Pancreas (tissue), 10 donors: ENCODE measurements at regions of chr20 and their contacts with region 1.

Region 1: GRCh38 chr20:36205026-36205425 is 31.3 kb upstream of the AAR2 start:
- DNase-seq: no peak
- ATAC-seq: no peak
- H3K4me3 ChIP-seq: no peak overlapping the region
- H3K27ac ChIP-seq: no peak overlapping the region
- H3K4me1 ChIP-seq: no peaks in the 10 kb centered on the region
- H3K27me3 ChIP-seq: no peaks in the 10 kb centered on the region
- CTCF ChIP-seq: no peak

Region 2: DNA sequence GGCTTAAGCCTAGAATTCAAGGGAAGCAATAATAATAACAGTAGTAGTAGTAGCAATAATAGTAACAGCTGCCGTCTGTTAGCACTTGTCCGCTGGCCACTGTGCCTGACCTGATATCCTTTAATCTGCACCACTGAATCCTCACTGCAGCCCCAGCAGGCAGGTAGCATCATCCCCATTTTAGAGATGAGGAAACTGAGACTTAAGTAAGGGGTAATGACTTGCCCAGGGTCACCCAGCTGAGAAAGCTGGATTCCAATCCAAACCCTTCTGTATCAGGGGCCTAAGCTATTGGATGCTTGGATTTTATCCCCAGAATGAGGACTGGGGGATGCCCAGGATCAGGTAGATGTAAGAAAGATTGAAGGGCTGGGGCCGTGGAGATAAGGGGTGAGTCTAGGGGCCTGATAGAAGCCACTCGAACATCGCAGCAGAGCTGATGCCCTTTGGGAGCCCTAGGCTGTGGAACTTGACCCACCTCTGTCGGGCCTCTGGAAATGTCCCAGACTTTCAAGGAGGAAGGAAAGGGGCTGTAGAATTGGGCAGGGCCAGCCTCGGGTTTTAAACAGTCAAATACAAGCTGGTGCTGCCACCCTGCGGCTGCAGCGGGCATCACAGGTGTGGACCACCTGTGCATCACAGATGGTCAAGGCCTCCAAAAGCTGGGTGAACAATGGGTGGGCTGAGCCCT is 234.2 kb after region 1 on chr20:
- intact Hi-C with region 1: loop called in 1 of 3 experiments (anchors 5 kb)
- DNase-seq: peak; percentile 44 to 89 (median 66)
- ATAC-seq: peak; percentile 35 to 74 (median 72)
- H3K4me3 ChIP-seq: no peak overlapping the region
- H3K27ac ChIP-seq: no peak overlapping the region
- H3K4me1 ChIP-seq: no peaks in the 10 kb centered on the region
- H3K27me3 ChIP-seq: no peaks in the 10 kb centered on the region
- CTCF ChIP-seq: peak; percentile 76 to 94 (median 86)

Region 3: DNA sequence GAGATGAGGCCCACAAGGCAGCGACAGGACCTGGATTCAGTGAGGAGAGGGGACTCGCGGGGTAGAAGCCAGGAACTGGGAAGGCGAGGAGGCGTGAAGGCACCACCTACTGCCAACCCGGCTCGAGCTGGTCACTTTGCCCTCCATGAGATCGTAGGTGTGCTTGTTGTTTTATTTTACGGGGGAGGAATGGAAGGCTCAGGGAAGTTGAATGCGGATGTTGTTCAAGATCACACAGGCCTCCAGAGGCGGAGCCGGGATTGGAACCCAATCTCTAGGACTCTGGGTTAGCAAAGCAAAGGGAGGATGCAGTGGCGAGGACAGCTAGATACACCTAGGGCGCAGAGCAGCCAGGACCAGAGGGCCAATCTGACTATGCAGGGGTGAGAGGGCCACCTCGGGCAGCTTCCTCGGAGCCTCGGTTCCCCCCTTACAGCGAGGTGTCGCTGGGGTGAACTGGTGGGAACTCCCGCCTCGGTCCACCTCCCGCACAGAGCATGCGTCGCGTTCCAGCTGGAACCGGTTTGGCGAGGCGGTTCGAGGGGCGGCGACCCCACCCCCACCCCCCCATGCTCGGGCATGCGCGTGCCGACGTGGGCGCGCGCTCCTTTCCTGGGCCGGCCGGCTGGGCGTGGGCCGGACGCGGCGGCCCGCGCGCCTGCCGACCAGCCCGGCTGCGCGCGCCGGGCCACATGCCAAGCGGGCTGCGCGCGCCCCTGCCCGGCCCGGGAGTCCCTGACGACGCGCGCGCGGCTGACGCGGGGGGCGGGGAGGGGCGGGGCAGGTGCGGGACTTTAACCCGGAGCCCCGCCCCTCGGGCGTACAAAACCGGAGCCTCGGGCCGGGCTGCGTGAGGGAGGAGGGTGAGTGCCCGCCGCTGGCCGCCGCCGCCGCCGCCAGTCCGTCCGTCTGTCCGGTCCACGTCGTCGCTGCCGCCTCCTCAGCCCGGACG is 255.9 kb after region 1 on chr20:
- intact Hi-C with region 1: no loop called
- DNase-seq: peak; percentile 90 to 97 (median 94)
- ATAC-seq: peak; percentile 78 to 83 (median 80)
- H3K4me3 ChIP-seq: peak overlapping the region in 3 of 4 donors; percentile 56 to 90 (median 86)
- H3K27ac ChIP-seq: peak overlapping the region; percentile 91 to 97 (median 95)
- H3K4me1 ChIP-seq: peaks cover 19 to 30% (median 23%) of the 10 kb centered on the region in 3 donors
- H3K27me3 ChIP-seq: no peaks in the 10 kb centered on the region
- CTCF ChIP-seq: no peak